OCI-LY7 (cell line): ENCODE measurements at regions of chr19 and their contacts with region 1.

Region 1: DNA sequence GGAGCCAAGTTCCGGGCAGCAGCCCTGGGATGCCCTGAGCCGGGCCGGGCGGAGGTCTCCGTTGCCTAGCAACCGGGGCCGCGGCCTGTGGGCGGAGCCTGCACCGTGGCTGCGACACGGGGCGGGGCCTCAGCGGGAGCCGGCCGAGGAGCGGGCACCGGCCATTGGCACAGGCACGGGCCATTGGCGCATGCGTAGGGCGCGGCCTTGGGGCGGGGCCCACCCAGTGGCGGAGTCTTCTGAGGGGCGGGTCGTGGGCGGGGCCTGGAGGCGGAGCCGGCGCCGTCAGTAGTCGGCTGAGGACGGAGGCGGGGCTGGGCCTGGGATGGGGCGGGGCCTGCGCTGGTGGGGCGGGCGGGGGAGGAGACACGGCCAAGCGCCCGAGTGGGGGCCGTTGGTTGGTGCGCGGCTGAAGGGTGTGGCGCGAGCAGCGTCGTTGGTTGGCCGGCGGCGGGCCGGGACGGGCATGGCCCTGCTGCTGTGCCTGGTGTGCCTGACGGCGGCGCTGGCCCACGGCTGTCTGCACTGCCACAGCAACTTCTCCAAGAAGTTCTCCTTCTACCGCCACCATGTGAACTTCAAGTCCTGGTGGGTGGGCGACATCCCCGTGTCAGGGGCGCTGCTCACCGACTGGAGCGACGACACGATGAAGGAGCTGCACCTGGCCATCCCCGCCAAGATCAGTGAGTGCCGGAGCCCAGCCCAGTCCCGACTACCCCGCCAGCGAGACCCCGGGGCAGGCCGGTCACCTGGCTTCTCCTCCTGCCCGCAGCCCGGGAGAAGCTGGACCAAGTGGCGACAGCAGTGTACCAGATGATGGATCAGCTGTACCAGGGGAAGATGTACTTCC is at the start of gene IZUMO4:
- DNase-seq: peak; percentile 97
- H3K4me3 ChIP-seq: peak within 1 kb of the TSS; percentile 85
- H3K27ac ChIP-seq: peak within 1 kb of the TSS; percentile 94
- H3K4me1 ChIP-seq: peaks cover 33% of the 10 kb centered on the region
- CTCF ChIP-seq: peak; percentile 72
- total RNA-seq, gene IZUMO4: 11.2 and 12.9 TPM in 2 replicates

Region 2: DNA sequence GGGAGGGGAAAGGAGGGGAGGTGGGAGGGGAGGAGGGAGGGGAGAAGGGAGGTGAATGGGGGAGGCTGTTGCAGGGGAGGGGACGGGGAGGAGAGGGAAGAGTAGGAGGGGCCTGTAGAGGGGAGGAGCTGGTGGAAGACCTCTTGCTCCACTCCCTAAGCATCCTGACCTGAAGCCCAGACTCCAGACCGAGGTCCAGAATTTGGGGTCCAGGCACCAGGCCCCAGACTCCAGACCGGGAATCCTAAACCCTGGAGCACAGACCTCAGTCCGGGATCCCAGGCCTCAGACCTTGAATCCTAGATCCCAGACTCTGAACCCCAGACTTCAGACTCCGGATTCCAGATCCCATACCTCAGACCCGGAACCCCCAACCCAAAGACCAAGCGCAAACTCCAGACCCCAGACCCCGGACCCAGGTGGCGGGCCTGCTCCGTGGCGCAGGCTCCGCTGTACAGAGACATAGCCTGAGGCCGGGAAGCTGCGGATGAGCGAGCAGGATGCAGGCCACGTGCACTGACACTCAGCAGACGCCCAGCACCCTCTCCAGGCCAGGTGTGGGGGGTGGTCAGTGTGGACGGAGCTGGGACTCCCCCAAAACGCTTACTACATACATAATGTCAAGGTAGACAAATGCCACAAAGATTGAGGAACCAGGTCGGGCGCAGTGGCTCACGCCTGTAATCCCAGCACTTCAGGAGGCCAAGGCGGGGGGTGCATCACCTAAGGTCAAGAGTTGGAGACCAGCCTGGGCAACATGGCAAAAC is 80.5 kb before region 1 on chr19:
- CTCF ChIA-PET with region 1: no interaction called
- POLR2A ChIA-PET with region 1: no interaction called
- intact Hi-C with region 1: loop called (anchors 1 kb)
- DNase-seq: peak; percentile 82
- H3K4me3 ChIP-seq: peak overlapping the region; percentile 70
- H3K27ac ChIP-seq: peak overlapping the region; percentile 51
- H3K4me1 ChIP-seq: peaks cover 20% of the 10 kb centered on the region
- CTCF ChIP-seq: no peak

Region 3: DNA sequence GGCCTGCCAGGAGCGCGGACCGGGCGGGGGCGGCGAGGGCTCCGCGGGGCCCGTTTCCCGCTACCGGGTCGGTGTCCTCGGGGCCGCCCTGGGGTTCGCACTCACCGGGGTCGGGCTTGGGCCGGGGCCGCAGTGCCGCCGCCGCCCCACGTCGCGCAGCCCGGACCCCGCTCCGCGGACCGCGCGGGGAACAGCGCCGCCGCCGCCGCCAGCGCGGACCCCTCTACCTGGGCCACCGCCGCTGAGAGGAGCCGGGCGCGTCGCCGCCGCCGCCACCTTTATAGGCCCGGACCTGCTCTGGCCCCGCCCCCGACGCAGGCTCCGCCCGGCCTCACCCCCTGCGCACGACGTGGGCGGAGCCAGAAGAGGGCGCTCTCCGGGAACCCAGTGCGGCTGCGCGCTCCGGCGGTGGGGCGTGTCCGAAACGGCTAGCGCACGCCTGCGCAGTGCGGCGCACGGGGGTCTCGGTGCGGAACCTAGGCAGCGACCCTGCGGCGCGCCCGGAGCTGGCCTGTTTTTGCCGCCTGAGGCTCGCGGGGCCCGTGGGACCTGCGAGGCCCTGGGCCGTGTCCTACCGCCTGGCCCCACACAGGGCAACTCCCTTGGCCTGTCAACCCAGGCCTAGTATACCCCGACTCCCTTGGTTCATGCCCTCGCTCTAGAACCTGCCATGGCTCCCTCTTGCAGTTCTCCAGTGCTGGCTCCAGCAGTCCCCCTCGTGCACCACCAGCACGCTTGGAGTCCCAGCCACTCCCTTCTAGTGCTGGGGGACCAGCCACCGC is 45.5 kb before region 1 on chr19 and contains the start of gene MKNK2:
- CTCF ChIA-PET with region 1: no interaction called
- POLR2A ChIA-PET with region 1: interaction called, 4 read pairs
- intact Hi-C with region 1: loop called (anchors 2 kb)
- DNase-seq: peak; percentile 93
- H3K4me3 ChIP-seq: peak within 1 kb of the TSS; percentile 98
- H3K27ac ChIP-seq: peak within 1 kb of the TSS; percentile 70
- H3K4me1 ChIP-seq: peaks cover 58% of the 10 kb centered on the region
- CTCF ChIP-seq: peak; percentile 69
- total RNA-seq, gene MKNK2: 97.0 and 115 TPM in 2 replicates

Region 4: GRCh38 chr19:2627319-2627829 is 530.7 kb after region 1 on chr19:
- CTCF ChIA-PET with region 1: no interaction called
- POLR2A ChIA-PET with region 1: no interaction called
- intact Hi-C with region 1: loop called (anchors 10 kb)
- DNase-seq: peak; percentile 92
- H3K4me3 ChIP-seq: peak overlapping the region; percentile 30
- H3K27ac ChIP-seq: peak overlapping the region; percentile 93
- H3K4me1 ChIP-seq: peaks cover 79% of the 10 kb centered on the region
- CTCF ChIP-seq: no peak